A549 (cell line): ENCODE measurements at regions of chr17 and their contacts with region 1.

Region 1: DNA sequence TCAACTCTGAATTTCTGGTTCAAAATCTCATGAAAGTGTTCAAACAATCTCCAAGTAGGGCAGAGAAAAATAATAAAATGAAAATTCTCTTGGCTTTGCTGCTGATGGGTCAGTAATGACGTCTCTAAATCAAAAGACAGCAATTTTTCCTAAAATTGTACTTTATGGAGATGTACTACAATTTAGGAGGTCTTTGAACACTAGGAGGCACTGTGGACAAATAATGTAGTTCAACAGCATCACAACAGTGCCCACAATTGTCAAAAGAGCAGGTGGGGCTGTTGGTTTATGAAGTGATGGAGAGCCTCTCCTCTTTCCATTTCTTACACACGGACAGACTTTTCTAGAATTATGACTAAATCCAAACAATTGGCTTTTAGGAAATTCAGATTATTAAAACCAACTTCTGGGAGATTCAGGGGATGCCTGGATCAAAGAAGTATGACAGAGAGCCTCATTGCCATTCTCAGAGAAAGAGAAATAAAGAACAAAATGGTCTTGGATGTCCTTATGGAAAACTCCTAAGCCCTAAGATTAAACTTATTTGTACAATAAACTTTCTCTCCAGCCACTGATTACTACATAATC is 23.8 kb downstream of the EZH1 start:
- DNase-seq: peak; percentile 77 to 80
- ATAC-seq: peak; percentile 95 to 96
- H3K4me3 ChIP-seq: no peak overlapping the region
- H3K27ac ChIP-seq: no peak overlapping the region
- H3K4me1 ChIP-seq: no peaks in the 10 kb centered on the region
- CTCF ChIP-seq: peak; percentile 95
- EP300 ChIP-seq: no peak
- POLR2A ChIP-seq: no peak
- RAD21 ChIP-seq: peak; percentile 83 to 88

Region 2: DNA sequence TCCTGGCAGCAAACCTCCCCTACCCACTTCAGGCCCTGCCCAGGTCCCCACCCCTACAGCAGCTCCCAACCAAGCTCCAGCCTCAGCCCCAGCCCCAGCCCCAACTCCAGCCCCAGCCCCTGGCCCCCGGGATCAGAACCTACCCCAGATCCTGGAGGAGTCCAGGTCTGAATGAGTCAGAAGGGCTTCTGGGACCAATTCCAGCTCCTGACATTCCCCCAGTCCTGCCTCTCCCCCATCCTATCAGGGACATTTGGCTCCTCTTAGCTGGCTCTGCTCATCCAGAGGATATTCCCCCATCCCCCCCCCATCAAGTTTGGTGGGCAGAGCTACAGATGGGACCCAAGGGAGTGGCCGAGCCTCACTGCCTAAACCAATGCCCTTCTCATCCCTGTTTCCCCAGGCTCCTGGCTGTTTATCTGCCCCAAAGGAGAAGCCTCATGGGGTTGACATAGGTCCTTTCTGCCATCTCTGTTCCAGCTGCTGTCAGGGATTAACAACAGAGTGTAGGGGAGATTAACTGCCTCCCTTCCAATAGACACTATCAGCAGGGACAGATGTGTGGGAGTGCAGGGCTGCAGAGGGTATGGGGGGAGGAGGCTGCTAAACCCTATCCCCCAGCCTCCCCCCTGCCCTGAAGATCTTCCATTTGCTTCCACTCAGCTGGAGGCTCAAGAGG is 22.2 kb before region 1 on chr17:
- CTCF ChIA-PET with region 1: interaction called, 16 read pairs
- POLR2A ChIA-PET with region 1: no interaction called
- DNase-seq: no peak
- ATAC-seq: peak; percentile 17 to 45; a peak in 2 of 6 replicates
- H3K4me3 ChIP-seq: no peak overlapping the region
- H3K27ac ChIP-seq: no peak overlapping the region
- H3K4me1 ChIP-seq: peaks cover 6% of the 10 kb centered on the region; the same call in 2 of the 3 replicates
- CTCF ChIP-seq: no peak
- EP300 ChIP-seq: no peak
- POLR2A ChIP-seq: no peak
- RAD21 ChIP-seq: no peak

Region 3: DNA sequence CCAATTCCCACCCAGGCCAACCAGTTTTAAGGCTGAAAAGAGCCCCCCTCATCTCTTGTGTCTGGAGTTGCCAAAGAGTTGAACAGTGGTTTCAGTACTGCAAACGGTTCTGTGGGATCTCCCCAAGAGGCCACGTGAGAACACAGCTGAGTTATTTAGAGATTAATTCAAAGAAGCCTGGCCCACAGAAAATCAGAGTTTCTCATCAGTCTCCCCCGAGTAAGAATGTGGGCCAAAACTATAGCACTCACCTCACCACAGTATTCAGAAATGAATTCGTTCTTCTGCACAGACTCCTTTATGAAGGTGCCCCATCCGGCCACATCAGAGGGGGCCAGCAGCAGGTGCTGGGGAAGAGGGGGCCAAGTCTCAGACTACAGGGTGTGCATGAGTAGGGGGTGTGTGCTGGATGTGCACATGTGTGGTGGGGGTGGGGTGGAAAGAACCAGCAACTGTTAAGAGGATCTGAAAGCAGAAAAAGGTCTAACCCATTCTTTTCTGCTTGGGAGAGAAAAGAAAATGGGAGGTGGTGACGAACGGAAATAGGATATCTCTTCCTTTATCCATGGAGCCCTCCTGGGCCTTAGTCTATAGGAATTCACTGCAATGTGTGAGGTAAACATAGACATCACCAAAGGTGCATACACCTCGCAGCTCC is 16.1 kb before region 1 on chr17:
- CTCF ChIA-PET with region 1: interaction called, 19 read pairs
- POLR2A ChIA-PET with region 1: no interaction called
- DNase-seq: no peak
- ATAC-seq: no peak
- H3K4me3 ChIP-seq: no peak overlapping the region
- H3K27ac ChIP-seq: no peak overlapping the region
- H3K4me1 ChIP-seq: no peaks in the 10 kb centered on the region
- CTCF ChIP-seq: no peak
- EP300 ChIP-seq: no peak
- POLR2A ChIP-seq: no peak
- RAD21 ChIP-seq: no peak

Region 4: DNA sequence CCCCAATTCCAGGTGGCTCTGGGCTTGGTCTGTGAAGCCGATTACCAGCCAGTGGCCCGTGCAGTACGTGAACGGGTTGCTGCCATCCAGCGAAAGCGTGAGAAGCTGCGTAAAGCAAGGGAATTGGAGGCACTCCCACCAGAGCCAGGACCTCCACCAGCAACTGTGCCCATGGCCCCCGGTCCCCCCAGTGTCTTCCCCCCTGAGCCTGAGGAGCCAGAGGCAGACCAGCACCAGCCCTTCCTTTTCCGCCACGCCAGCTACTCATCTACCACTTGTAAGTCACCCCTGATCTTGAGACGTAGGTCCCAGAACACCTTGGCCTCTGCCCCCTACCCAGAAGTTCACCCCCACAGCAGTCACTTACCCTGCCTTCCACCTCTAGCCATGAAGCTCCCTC is 66.2 kb after region 1 on chr17:
- CTCF ChIA-PET with region 1: no interaction called
- POLR2A ChIA-PET with region 1: no interaction called
- DNase-seq: no peak
- ATAC-seq: no peak
- H3K4me3 ChIP-seq: no peak overlapping the region
- H3K27ac ChIP-seq: no peak overlapping the region
- H3K4me1 ChIP-seq: peaks cover 18% of the 10 kb centered on the region
- CTCF ChIP-seq: no peak
- EP300 ChIP-seq: no peak
- POLR2A ChIP-seq: no peak
- RAD21 ChIP-seq: no peak